Tibial artery (tissue), 4 donors: ENCODE measurements at regions of chr19 and their contacts with region 1.

Region 1: DNA sequence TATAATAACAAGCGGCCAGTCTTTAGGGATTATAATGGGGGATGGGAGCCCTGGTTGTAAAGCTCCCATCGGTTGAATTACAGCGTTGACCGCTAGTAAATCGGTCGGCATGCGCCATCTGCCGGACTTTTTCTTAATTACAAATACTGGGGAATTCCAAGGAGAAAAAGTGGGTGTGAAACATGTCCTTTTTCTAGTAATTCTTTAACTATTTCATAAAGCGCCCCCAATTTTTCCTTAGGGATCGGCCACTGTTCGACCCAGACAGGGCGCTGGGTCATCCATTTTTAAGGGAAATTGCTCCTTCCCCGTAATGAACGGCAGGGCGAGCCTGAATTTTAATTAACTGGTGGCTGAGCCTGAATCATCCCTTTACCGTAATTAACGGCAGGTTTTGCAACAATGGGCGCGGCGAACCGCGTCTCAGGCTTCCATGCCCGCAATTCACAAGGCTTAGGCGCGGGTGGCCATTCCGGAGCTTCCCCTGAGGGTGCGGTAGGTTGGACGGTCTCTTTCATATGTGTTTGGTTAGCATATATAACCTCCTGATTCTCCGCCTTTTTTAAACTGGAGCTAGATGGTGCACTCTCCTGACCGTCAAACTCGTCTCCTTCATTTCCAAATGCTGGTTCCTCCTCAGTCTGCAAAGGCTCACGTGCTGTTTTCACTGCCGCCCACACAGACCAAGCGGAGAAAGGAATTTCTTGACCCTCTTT is 30.2 kb upstream of the EVI5L start:
- DNase-seq: peak in 1 of 2 donors; percentile 44
- H3K4me3 ChIP-seq: no peak overlapping the region
- H3K27ac ChIP-seq: no peak overlapping the region
- H3K4me1 ChIP-seq: peaks cover 0 to 6% (median 2%) of the 10 kb centered on the region in 4 donors
- H3K27me3 ChIP-seq: peaks cover 0 to 62% of the 10 kb centered on the region in 2 donors
- CTCF ChIP-seq: peak; percentile 22 to 51

Region 2: DNA sequence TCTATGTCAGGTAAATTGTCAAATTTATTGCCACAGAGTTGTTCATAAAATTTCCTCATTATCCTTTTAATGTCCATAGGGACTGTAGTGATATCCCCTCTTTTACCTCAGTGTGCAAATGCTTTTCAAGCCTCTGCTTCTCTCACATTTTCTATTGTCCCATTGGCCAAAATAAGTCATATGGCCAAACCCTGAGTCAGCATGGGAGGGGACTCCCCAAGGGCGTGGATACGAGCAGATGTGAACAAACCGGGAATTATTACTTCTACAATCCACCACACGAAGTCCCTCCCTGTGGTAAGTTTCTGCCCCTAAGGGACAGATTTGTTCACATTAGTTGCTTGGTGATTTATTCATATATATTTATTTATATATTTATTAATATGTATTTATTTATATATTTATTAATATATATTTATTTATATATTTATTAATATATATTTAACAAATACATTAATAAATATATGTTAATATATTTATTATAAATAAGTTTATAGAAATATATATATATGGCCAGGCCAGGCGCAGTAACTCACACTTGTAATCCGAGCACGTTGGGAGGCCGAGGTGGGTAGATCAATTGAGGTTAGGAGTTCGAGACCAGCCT is 224.3 kb before region 1 on chr19:
- intact Hi-C with region 1: loop called (anchors 10 kb)
- DNase-seq: no peak
- H3K4me3 ChIP-seq: no peak overlapping the region
- H3K27ac ChIP-seq: no peak overlapping the region
- H3K4me1 ChIP-seq: no peaks in the 10 kb centered on the region
- H3K27me3 ChIP-seq: no peaks in the 10 kb centered on the region
- CTCF ChIP-seq: no peak

Region 3: GRCh38 chr19:7641288-7642276 is 158.2 kb before region 1 on chr19:
- intact Hi-C with region 1: loop called (anchors 10 kb)
- DNase-seq: no peak
- H3K4me3 ChIP-seq: no peak overlapping the region
- H3K27ac ChIP-seq: no peak overlapping the region
- H3K4me1 ChIP-seq: peaks cover 0 to 5% (median 1%) of the 10 kb centered on the region in 4 donors
- H3K27me3 ChIP-seq: peaks cover 0 to 64% of the 10 kb centered on the region in 2 donors
- CTCF ChIP-seq: no peak